Right ventricle myocardium inferior (tissue), 1 donor: ENCODE measurements at regions of chr2 and their contacts with region 1.

Region 1: GRCh38 chr2:143259368-143259958 is 130.2 kb downstream of the ARHGAP15 start:
- DNase-seq: no peak
- ATAC-seq: no peak

Region 2: DNA sequence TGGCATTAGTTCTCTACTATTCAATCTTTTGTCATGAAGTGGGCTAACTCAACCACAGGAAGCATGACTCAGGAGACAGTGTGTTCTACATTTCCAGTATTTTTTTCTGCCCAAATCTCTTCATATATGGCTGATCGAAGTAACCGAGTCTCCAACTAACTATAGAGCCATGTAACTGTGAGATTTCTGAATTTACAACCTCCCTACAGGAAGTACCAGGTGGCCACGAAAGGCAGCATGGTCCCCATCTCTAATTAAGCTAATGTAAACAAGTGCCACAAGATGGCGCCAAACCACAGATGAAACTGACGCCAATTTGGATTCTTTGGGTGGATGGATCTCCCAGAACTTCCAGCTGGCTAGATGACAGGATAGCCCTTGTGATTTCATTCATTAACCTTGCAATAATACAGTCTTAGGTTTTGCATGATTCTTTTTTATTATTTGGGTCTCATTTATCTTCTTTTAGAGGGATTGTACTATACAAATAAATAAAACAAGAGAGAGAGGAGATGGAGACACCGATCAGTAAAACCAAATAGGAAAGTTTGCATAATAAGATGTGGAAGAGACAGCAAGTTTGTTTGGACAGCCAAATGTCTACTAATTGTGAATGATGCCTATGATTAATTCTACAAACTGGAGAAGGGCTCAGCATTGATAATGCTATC is 148.6 kb before region 1 on chr2:
- intact Hi-C with region 1: loop called (anchors 10 kb)
- DNase-seq: no peak
- ATAC-seq: peak; percentile 62

Region 3: GRCh38 chr2:143171532-143172216 is 87.8 kb before region 1 on chr2:
- intact Hi-C with region 1: loop called (anchors 5 kb)
- DNase-seq: no peak
- ATAC-seq: no peak

Region 4: DNA sequence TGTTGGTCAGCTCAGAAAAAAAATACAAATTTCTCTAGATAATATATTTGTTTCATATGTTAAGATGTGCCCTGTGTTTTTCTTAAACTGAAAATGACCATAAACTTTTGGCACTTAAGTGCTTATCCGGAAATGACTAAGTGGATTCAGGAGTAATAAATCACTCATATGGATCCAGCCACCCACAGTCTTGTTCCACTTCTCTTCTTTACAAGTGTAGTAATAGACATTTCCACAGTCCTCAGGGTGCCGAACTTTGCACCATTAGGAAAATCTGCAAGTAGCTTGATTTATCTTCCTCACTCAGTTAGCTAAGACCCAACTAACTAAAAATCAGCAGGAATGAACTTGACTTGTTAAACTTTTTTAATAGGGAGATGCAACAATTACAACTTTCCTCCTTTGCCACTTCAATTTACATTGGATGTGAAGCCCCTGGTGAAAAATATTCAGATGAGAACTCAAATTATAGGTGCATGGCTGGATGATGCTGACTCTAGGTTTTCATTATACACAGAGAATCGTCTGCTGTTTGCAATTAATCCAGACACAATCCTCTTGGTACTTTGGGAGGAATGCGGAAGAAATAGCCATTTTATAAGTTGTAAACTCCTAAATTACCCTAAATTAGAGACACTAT is 192.3 kb after region 1 on chr2:
- intact Hi-C with region 1: no loop called
- DNase-seq: no peak
- ATAC-seq: no peak